Natural killer cell (primary cell): ENCODE measurements at regions of chr14 and their contacts with region 1.

Region 1: GRCh38 chr14:67883717-67884116 is 64.1 kb downstream of the RAD51B start:
- DNase-seq: peak in 1 of 2 donors; percentile 22
- ATAC-seq: no peak
- H3K4me3 ChIP-seq: no peak overlapping the region
- H3K4me3 Mint-ChIP-seq: peak overlapping the region; percentile 29
- H3K27ac ChIP-seq: no peak overlapping the region
- H3K27ac Mint-ChIP-seq: peak overlapping the region in 1 of 2 donors; percentile 35
- H3K4me1 ChIP-seq: peaks cover 16% of the 10 kb centered on the region
- H3K4me1 Mint-ChIP-seq: peaks cover 40 to 43% of the 10 kb centered on the region in 2 donors
- H3K27me3 ChIP-seq: no peaks in the 10 kb centered on the region
- H3K27me3 Mint-ChIP-seq: peaks cover 0 to 2% of the 10 kb centered on the region in 2 donors
- CTCF ChIP-seq: peak; percentile 56

Region 2: GRCh38 chr14:67934008-67934481 is 50.3 kb after region 1 on chr14:
- intact Hi-C with region 1: no loop called
- DNase-seq: peak in 1 of 2 donors; percentile 66
- ATAC-seq: peak; percentile 50 to 77 (median 54)
- H3K4me3 ChIP-seq: no peak overlapping the region
- H3K4me3 Mint-ChIP-seq: no peak overlapping the region
- H3K27ac ChIP-seq: no peak overlapping the region
- H3K27ac Mint-ChIP-seq: peak overlapping the region in 1 of 2 donors; percentile 2
- H3K4me1 ChIP-seq: no peaks in the 10 kb centered on the region
- H3K4me1 Mint-ChIP-seq: peaks cover 5 to 6% of the 10 kb centered on the region in 2 donors
- H3K27me3 ChIP-seq: no peaks in the 10 kb centered on the region
- H3K27me3 Mint-ChIP-seq: no peaks in the 10 kb centered on the region
- CTCF ChIP-seq: peak; percentile 36

Region 3: DNA sequence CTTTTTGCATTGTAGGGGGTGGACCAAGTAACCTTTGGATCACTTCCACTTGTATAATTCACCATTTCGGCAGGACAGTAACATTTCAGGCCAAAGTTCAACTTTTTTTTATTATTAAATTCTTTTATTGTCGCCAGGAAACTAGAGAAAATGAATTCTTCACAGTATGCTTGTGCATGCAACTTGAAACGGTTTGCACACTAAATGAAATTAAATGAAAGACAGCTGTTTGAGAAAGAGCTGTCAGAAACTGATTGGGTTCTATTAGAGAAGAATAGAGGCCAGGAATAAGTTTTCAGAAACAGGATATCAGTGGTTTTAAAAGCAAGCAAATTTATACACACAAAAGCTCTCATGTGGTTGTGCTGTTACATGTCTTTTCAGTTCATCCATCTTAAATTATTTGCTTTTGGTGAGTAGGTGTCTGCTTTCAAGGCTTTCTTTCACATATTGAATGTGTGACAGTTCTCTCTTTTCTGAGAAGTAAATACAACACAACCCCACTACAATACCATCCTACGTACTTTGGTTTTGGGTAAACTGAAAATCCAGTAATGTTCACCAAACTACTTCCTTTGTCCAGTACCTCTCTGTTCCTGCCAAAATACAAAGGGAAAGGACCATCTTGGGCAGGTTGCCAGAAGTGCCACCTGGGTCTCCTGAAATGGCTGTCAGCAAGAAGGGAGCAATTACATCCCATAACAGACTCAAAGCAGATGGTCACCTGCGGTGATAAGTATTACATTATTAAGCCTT is 227.6 kb after region 1 on chr14:
- intact Hi-C with region 1: no loop called
- DNase-seq: no peak
- ATAC-seq: peak; percentile 55 to 79 (median 72)
- H3K4me3 ChIP-seq: no peak overlapping the region
- H3K4me3 Mint-ChIP-seq: no peak overlapping the region
- H3K27ac ChIP-seq: no peak overlapping the region
- H3K27ac Mint-ChIP-seq: peak overlapping the region; percentile 56 to 68
- H3K4me1 ChIP-seq: peaks cover 4% of the 10 kb centered on the region
- H3K4me1 Mint-ChIP-seq: peaks cover 31 to 33% of the 10 kb centered on the region in 2 donors
- H3K27me3 ChIP-seq: no peaks in the 10 kb centered on the region
- H3K27me3 Mint-ChIP-seq: no peaks in the 10 kb centered on the region
- CTCF ChIP-seq: no peak

Region 4: GRCh38 chr14:68843471-68844209 is 959.9 kb after region 1 on chr14:
- intact Hi-C with region 1: loop called (anchors 5 kb)
- DNase-seq: peak; percentile 75 to 86
- ATAC-seq: peak; percentile 64 to 73 (median 71)
- H3K4me3 ChIP-seq: no peak overlapping the region
- H3K4me3 Mint-ChIP-seq: peak overlapping the region; percentile 71
- H3K27ac ChIP-seq: no peak overlapping the region
- H3K27ac Mint-ChIP-seq: peak overlapping the region; percentile 31 to 86
- H3K4me1 ChIP-seq: peaks cover 32% of the 10 kb centered on the region
- H3K4me1 Mint-ChIP-seq: peaks cover 48 to 50% of the 10 kb centered on the region in 2 donors
- H3K27me3 ChIP-seq: no peaks in the 10 kb centered on the region
- H3K27me3 Mint-ChIP-seq: peaks cover 0 to 7% of the 10 kb centered on the region in 2 donors
- CTCF ChIP-seq: peak; percentile 93